ENCODE measurements at regions of chr20 and their contacts with region 1.

Region 1: GRCh38 chr20:44952736-44953135 is 7.5 kb downstream of the TOMM34 start:
- DNase-seq: no peak
- ATAC-seq: no peak
- H3K4me3 ChIP-seq: no peak overlapping the region
- H3K27ac ChIP-seq: no peak overlapping the region
- H3K4me1 ChIP-seq: peaks cover 10% of the 10 kb centered on the region
- H3K27me3 ChIP-seq: no peaks in the 10 kb centered on the region
- CTCF ChIP-seq: no peak
- EP300 ChIP-seq: no peak
- POLR2A ChIP-seq: no peak
- RAD21 ChIP-seq: no peak

Region 2: GRCh38 chr20:44942264-44942973 is 10.3 kb before region 1 on chr20:
- CTCF ChIA-PET with region 1: no interaction called
- POLR2A ChIA-PET with region 1: interaction called, 14 read pairs
- in situ Hi-C with region 1: no loop called
- intact Hi-C with region 1: no loop called
- DNase-seq: peak; percentile 21
- ATAC-seq: peak; percentile 75
- H3K4me3 ChIP-seq: no peak overlapping the region
- H3K27ac ChIP-seq: no peak overlapping the region
- H3K4me1 ChIP-seq: peaks cover 16% of the 10 kb centered on the region
- H3K27me3 ChIP-seq: no peaks in the 10 kb centered on the region
- CTCF ChIP-seq: peak; percentile 47; the same call in 1 of the 2 replicates
- EP300 ChIP-seq: no peak
- POLR2A ChIP-seq: 0 out of 4 replicates have a peak, but pooled peaks of 1 of the 2 experiments have one; percentile 38
- RAD21 ChIP-seq: no peak

Measured in HepG2 (cell line).